HEK293 (cell line): ENCODE measurements at regions of chr17 and their contacts with region 1.

Region 1: GRCh38 chr17:11644261-11645212 is 46.3 kb downstream of the DNAH9 start:
- H3K4me3 ChIP-seq: no peak overlapping the region
- H3K27ac ChIP-seq: no peak overlapping the region
- H3K4me1 ChIP-seq: no peaks in the 10 kb centered on the region
- CTCF ChIP-seq: no peak

Region 2: DNA sequence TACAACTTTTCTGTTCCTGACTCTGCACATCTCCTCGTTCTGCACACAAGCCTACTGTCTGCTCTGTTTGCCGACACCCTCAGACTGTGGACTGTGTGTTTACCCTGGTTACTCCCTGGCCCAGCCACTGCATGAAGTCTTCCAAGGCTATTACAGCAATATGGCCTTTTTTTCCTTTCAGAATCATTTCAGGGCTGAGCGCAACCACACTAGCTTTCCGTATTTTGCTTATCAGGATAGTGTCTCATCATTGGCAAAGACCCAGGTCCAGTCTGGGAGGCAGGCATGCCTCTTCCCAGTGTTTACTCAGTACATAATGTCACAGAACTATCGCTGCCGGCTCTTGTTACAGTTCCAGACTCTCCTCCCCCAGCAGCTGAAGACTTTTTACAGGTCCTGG is 36.1 kb before region 1 on chr17:
- CTCF ChIA-PET with region 1: interaction called, 10 read pairs
- POLR2A ChIA-PET with region 1: no interaction called
- H3K4me3 ChIP-seq: no peak overlapping the region
- H3K27ac ChIP-seq: no peak overlapping the region; the same call in 1 of the 2 replicates
- H3K4me1 ChIP-seq: peaks cover 10% of the 10 kb centered on the region
- CTCF ChIP-seq: no peak

Region 3: GRCh38 chr17:11668618-11669017 is 24.1 kb after region 1 on chr17:
- CTCF ChIA-PET with region 1: interaction called, 10 read pairs
- POLR2A ChIA-PET with region 1: no interaction called
- H3K4me3 ChIP-seq: no peak overlapping the region
- H3K27ac ChIP-seq: no peak overlapping the region
- H3K4me1 ChIP-seq: no peaks in the 10 kb centered on the region
- CTCF ChIP-seq: no peak